Kidney (tissue), 22 donors: ENCODE measurements at regions of chr2 and their contacts with region 1.

Region 1: GRCh38 chr2:10733575-10733943 is 12.1 kb downstream of the ATP6V1C2 start:
- DNase-seq: no peak
- H3K4me3 ChIP-seq: no peak overlapping the region
- H3K27ac ChIP-seq: no peak overlapping the region
- H3K4me1 ChIP-seq: no peaks in the 10 kb centered on the region
- H3K27me3 ChIP-seq: no peaks in the 10 kb centered on the region
- CTCF ChIP-seq: no peak

Region 2: DNA sequence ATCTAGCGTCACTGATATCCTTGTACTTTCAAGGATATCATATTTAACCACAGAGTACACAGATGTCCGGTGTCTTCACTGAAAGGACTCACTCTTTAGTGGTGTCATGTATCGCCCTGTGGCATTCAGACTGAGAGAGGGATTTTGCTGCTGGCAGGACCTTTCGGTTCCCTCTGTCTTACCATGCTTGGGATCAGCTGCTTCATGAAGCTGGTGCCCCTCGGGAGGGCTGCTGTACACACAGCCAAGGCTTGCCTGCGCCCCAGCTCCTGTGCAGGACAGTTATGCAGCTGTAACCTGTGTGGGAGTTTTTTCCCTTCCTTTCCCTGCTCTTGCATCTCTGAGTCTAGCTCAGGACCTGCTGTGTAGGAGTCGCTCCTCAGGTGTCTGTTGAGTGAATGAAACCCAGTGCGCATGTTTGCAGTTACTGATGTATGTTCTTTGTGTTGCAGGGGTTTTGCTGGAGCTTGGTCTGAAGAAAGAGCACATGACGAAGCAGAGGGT is 864.7 kb after region 1 on chr2:
- intact Hi-C with region 1: loop called (anchors 10 kb)
- DNase-seq: peak; percentile 11 to 79 (median 65)
- H3K4me3 ChIP-seq: no peak overlapping the region
- H3K27ac ChIP-seq: no peak overlapping the region
- H3K4me1 ChIP-seq: no peaks in the 10 kb centered on the region
- H3K27me3 ChIP-seq: no peaks in the 10 kb centered on the region
- CTCF ChIP-seq: no peak

Region 3: DNA sequence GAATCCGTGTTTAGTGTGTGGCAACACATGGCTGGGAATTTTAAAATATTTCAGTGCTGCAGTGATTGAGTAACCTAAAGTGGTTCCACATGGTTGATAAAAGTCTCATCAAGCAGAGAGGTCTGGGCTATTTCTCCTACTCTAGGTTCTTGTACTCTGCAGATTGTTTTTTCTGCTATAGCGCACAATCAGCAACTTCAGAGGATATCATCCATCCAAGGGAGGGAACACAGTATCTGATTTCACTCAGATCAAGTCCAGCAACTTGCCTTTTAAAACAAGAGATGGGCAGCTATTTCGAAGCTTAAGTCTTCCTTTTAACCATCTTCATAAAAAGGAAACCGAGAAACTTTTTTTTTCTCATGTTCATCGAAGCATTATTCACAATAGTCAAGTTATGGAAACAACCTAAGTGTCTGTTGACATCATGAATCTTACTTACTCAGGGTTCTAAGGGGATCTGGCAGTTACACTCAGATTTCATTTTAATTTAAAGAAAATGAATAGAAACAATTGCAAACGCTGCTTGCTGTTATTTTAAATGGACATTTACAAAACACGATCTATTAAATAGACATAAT is 1810.5 kb after region 1 on chr2:
- intact Hi-C with region 1: no loop called
- DNase-seq: peak in 3 of 5 donors; percentile 30 to 85 (median 74)
- H3K4me3 ChIP-seq: no peak overlapping the region
- H3K27ac ChIP-seq: no peak overlapping the region
- H3K4me1 ChIP-seq: peaks cover 4 to 11% (median 5%) of the 10 kb centered on the region in 3 donors
- H3K27me3 ChIP-seq: no peaks in the 10 kb centered on the region
- CTCF ChIP-seq: no peak